ENCODE measurements at regions of chr12 and their contacts with region 1.

Region 1: DNA sequence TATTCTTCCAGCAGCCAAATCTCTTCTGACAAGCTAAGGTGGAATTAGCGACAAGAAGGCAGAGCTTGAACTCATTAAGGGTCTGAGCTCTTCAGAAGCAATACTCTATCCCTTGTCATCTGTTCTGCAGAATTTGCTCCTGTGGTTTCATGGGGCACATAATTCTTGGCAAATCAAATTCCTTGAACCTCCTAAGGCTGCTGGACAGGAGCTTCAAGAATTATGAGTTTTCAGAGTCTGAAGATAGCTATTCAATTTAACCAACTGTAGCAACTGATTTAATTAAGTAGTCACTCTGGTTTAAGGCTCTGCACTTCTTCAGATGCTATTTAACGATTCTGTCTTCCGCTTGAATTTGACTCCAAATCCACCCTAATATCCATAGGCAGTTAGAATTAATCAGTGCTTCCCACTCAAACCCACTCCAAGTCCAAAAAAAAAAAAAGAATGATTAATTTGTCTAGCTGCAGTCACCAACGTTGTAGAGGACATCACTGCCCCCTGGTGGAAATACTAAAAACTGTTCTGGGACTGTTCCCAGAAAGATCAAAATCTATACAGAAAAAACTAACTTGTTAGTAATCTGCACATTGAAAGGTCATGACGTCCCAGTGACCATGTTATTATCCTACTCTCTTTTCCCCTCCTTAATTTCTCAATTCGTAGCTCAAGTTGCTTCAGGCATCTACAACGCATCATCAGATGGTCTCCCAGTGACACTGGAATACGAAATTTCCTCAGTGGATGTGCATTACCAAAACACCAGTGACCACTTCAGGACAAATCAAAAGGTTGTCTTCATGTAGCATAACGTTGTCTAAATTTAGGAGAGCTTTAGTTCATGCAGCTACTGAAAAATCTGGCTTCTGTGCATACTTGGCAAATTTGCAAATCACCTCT is 169.8 kb downstream of the KIF21A start:
- DNase-seq: peak; percentile 14 to 24
- H3K4me3 ChIP-seq: no peak overlapping the region
- H3K27ac ChIP-seq: peak overlapping the region in 2 of 3 donors; percentile 1 to 32
- H3K4me1 ChIP-seq: peaks cover 15 to 18% of the 10 kb centered on the region in 2 donors
- H3K27me3 ChIP-seq: no peaks in the 10 kb centered on the region
- CTCF ChIP-seq: peak; percentile 19 to 72 (median 43)
- POLR2A ChIP-seq: no peak

Region 2: DNA sequence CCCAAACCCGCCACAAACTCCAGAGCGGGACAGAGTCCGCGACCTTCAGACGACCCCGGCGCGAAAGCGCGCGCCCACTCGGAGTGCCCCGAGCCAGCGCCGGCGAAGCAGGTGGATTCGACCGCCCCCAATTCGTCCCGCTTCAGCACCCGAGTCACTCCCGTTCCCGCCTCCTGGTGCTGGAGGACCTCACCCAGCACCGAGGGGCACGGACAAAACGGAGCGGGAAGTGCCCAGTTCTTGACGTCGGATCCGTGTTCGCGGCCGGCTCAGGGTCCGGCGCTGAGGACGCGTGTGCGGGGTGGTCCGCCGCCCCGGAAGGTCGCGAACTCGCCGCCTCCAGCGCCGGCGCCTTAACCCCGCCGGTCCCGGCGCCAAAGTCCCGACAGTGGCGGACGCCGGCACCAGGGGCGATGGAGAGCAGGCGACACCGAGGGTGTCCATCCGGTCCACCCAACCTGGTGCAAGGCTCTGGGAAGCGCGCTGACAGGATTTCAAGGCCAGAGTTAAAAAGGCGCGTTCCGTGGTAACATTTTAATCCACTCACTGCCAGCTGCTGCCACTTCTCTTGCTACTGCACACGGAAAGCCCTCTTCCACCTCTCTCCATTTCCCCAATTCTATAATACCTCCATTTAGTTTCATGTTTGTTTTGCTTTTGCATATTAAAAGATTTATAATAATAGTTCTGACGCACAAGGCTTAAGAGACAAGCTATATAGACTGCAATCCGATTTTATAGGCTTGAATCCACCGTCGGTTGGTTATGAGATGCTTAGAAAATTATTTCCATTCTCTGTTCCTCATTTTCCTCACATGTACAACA is 127.7 kb before region 1 on chr12:
- intact Hi-C with region 1: loop called (anchors 10 kb)
- DNase-seq: peak; percentile 23 to 66
- H3K4me3 ChIP-seq: peak overlapping the region in 2 of 3 donors; percentile 8 to 42
- H3K27ac ChIP-seq: peak overlapping the region in 1 of 3 donors; percentile 32
- H3K4me1 ChIP-seq: no peaks in the 10 kb centered on the region
- H3K27me3 ChIP-seq: no peaks in the 10 kb centered on the region
- CTCF ChIP-seq: peak; percentile 32 to 82 (median 66)
- POLR2A ChIP-seq: no peak

Region 3: DNA sequence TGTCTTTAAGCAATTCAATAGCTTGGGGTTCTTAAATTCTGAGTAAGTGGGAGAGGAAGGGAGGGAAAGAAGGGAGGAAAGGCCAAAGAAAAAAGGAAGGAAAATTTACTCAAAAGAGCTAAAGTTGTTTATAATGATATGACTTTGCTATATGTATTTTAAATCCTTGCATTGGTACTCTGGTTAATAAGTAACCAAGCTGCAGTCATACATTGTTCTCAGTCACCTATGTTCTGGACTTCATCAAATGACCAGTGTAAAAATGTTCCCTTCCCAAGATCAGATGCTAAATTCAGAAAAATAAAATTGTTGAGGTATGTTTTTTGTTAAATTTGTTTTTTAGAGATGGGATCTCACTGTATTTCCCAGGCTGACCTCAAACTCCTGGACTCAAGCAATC is 107.8 kb before region 1 on chr12:
- intact Hi-C with region 1: no loop called
- DNase-seq: no peak
- H3K4me3 ChIP-seq: no peak overlapping the region
- H3K27ac ChIP-seq: no peak overlapping the region
- H3K4me1 ChIP-seq: no peaks in the 10 kb centered on the region
- H3K27me3 ChIP-seq: no peaks in the 10 kb centered on the region
- CTCF ChIP-seq: no peak
- POLR2A ChIP-seq: no peak

Region 4: DNA sequence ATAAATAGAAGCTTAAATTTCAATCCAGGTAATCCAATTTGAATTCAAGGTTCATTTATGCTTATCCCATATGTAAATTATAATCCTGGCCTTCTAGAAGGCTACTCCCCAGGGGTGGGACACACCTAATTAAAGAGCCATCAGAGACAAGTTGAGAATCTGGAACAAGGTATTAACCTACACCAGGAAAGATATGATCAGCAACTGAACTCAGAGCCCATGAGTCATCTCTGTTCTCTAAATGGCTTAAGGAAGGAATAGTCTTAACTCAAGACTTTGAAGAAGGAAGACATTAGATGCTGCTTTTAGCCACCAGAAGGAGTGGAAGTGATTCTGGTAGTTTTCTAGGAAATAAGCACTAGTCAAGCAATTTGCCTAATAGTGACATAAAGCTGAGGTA is 81.8 kb after region 1 on chr12:
- intact Hi-C with region 1: no loop called
- DNase-seq: no peak
- H3K4me3 ChIP-seq: no peak overlapping the region
- H3K27ac ChIP-seq: no peak overlapping the region
- H3K4me1 ChIP-seq: no peaks in the 10 kb centered on the region
- H3K27me3 ChIP-seq: no peaks in the 10 kb centered on the region
- CTCF ChIP-seq: no peak
- POLR2A ChIP-seq: no peak

Region 5: DNA sequence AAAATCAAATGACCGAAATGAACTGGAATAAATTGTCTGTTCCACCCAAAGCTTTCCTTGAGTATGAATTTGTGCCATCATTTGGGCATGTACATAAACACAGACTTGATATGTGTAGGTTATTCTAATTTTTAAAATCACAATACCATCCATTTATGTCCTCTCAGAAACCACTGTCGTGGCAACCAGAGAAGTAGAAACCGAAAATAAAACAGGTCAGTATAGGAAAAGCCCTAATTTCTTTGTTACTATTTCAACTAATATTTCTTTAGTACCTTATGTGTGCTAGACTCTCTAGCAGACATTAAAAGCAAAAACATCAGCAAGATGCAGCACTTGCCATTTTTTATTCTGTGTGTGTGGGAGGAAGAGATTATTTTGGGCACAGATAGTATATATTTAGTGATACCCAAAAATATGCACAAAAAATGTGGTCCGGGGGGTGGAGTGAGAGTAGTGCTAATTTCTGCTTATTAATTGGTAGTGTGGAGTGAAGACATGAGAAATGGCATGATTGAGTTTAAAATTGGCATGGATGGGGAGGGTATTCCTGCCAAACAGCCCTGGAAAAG is 1288.4 kb after region 1 on chr12:
- intact Hi-C with region 1: no loop called
- DNase-seq: no peak
- H3K4me3 ChIP-seq: no peak overlapping the region
- H3K27ac ChIP-seq: no peak overlapping the region
- H3K4me1 ChIP-seq: no peaks in the 10 kb centered on the region
- H3K27me3 ChIP-seq: no peaks in the 10 kb centered on the region
- CTCF ChIP-seq: no peak
- POLR2A ChIP-seq: no peak

Measured in thyroid gland (tissue), 4 donors.